Gastrocnemius medialis (tissue), 4 donors: ENCODE measurements at regions of chr11 and their contacts with region 1.

Region 1: GRCh38 chr11:77047007-77047927 is 13.1 kb downstream of the B3GNT6 start:
- DNase-seq: peak; percentile 65 to 74
- ATAC-seq: peak; percentile 97 to 98
- H3K4me3 ChIP-seq: peak overlapping the region; percentile 42 to 52 (median 50)
- H3K27ac ChIP-seq: peak overlapping the region in 1 of 4 donors; percentile 6
- H3K4me1 ChIP-seq: peaks cover 3 to 5% of the 10 kb centered on the region in 2 donors
- H3K27me3 ChIP-seq: peaks cover 15 to 20% (median 16%) of the 10 kb centered on the region in 3 donors
- CTCF ChIP-seq: peak; percentile 55 to 65 (median 58)
- POLR2A ChIP-seq: no peak

Region 2: DNA sequence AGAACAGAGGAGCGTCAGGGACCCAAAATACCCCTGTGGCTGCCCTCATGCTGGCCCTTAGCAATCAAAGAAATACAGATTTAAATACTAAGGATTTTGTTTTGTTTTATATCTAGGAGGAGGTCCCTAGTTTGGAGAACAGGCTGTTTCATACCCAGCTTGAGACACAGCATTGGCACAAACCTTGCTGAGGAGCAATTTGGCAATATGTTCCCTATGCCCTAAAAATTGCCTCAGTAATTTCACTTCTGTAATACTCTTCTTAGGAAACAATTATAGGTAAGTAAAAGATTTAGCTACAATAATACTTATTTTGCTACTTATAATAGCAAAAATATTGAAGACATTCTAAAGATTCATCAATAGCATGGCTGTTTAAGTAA is 227.1 kb before region 1 on chr11:
- in situ Hi-C with region 1: no loop called
- intact Hi-C with region 1: no loop called
- DNase-seq: no peak
- ATAC-seq: no peak
- H3K4me3 ChIP-seq: no peak overlapping the region
- H3K27ac ChIP-seq: peak overlapping the region in 1 of 4 donors; percentile 27
- H3K4me1 ChIP-seq: no peaks in the 10 kb centered on the region
- H3K27me3 ChIP-seq: no peaks in the 10 kb centered on the region
- CTCF ChIP-seq: no peak
- POLR2A ChIP-seq: no peak

Region 3: DNA sequence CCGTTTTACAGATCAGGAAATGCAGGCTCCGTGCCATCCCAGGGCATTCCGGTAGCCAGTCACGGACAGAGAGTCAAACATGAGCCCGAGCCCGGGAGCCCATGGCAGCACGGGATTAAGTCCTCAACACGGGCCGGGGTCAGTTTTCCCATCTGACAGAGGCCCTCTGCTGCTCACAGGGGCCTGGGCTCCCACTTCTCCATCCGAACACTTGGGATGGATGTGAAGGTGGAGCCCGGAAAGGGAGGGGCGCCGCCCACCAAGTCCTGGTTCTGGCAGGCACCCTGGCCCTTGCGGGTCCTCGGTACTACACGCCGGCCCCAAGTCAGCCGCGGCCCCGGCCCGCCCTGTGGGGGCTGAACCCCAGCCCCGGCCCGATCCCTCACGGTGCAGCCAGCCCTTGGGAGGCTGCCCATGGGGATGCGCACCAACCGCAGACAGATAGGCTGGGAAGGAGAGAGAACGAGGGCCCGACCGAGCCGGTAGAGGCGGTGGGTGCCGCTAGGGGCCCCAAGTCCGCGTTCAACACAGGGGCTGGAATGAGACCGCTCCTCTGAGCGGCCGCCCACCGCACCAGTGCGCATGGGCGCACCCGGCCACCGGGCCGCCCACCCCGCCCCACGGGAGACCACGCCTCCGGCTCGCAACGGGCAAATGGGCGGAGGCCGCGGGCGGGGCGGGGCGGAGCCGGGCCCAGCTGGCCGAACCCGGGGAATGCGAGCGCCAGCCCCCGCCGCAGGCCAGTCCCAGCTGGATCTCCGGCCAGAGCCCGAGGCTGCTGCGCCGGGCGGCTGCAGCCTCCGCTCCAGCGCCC is 19.2 kb after region 1 on chr11 and contains the start of gene CAPN5:
- in situ Hi-C with region 1: no loop called
- intact Hi-C with region 1: loop called (anchors 1 kb)
- DNase-seq: peak; percentile 73 to 84
- ATAC-seq: peak; percentile 90 to 95
- H3K4me3 ChIP-seq: peak within 1 kb of the TSS; percentile 74 to 92 (median 83)
- H3K27ac ChIP-seq: peak within 1 kb of the TSS; percentile 83 to 88 (median 84)
- H3K4me1 ChIP-seq: peaks cover 7 to 16% of the 10 kb centered on the region in 2 donors
- H3K27me3 ChIP-seq: no peaks in the 10 kb centered on the region
- CTCF ChIP-seq: peak in 4 of 5 experiments; percentile 29 to 38 (median 37)
- POLR2A ChIP-seq: peak; percentile 79 to 80
- total RNA-seq, gene CAPN5: 0.58 to 12.4 (median 1.5) TPM

Region 4: DNA sequence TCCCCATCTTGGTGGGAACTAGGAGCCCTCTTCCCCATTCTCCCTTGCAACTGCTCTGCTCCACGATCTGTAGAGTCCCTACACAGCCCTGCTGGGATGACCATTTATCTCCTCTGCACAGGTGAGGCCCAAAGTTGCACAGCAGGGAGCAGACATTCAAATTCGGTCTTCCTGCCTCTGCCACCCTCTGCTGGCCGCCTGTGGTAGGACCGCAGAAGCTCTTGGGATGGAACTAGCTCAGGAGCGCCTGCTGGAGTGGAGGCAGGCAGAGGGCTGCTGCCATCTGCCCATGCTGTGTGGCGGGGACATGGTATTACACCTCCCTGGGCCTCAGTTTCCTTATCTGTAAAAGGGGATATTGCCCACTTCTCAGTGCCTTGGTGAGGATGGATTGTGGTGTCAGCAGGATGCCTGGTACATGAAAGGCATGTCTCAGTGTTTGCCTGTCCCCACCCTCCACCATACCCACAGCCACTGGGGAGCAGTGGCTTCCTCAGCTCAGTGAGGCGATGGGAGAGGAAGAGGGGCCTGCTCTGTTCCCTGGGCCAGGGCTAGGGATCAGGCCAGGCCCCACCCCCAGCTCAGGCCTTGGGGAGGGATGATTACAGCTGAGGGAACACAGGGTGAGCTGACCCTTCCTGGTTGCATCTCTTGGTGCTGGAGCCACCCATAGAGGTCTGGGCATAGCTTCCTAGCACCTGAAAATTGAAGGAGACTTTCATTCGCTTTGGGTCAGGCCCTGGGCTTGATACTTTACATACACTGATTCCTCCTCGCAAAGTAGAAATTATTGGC is 44.1 kb after region 1 on chr11:
- in situ Hi-C with region 1: loop called (anchors 5 to 10 kb)
- intact Hi-C with region 1: loop called (anchors 1 kb)
- DNase-seq: peak; percentile 43 to 62
- ATAC-seq: peak; percentile 89 to 92
- H3K4me3 ChIP-seq: no peak overlapping the region
- H3K27ac ChIP-seq: no peak overlapping the region
- H3K4me1 ChIP-seq: no peaks in the 10 kb centered on the region
- H3K27me3 ChIP-seq: no peaks in the 10 kb centered on the region
- CTCF ChIP-seq: peak; percentile 83 to 91 (median 87)
- POLR2A ChIP-seq: no peak